ENCODE measurements at regions of chr5 and their contacts with region 1.

Region 1: DNA sequence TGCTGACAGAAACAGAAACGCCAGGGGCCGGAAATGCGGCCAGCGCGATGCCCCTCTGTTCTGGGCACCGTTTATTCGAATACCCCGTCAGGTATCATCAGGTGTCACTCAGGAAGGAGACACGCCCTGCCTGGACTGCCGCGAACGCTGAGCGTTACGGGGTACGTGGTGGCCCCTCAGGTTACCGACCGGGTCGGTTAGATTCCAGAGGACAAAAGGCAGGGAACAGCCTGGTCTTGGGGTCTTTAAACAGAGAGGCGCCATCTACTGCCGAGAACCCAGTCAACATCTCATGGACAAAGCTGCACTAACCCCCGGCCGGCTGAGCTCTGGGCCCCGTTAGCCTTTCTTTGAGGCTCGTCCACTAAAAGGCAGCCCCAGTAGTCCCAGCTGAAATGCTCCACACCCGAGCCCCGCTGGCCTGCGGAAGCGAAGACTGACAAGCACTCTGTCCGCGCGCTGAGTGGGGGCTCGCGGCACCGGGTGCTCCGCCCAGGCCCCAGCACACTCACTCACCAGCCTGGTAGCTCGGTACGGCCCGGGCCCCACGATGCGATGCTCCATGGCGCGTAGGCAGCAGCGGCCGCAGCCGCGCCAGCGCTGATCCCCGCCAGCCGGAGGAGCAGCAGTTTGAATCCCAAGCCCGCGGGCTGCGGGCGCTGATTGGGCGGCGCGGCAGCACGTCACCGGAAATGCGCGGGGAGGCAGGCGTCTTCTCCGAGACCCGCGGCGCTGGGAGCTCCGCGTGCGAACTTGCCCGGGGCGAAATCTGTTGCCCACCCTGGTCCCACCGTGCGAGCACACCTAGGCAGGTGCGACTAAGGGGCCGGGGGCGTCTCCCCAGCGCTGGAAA is at the start of gene DEPDC1B:
- DNase-seq: peak; percentile 91
- H3K4me3 ChIP-seq: peak within 1 kb of the TSS; percentile 83
- H3K27ac ChIP-seq: peak within 1 kb of the TSS; percentile 86
- H3K4me1 ChIP-seq: no peaks in the 10 kb centered on the region
- H3K27me3 ChIP-seq: no peaks in the 10 kb centered on the region
- CTCF ChIP-seq: no peak
- total RNA-seq, gene DEPDC1B: 8.4 to 25.1 TPM

Region 2: GRCh38 chr5:60522292-60522905 is 177.4 kb before region 1 on chr5:
- intact Hi-C with region 1: no loop called
- DNase-seq: no peak
- H3K4me3 ChIP-seq: no peak overlapping the region
- H3K27ac ChIP-seq: no peak overlapping the region
- H3K4me1 ChIP-seq: no peaks in the 10 kb centered on the region
- H3K27me3 ChIP-seq: no peaks in the 10 kb centered on the region
- CTCF ChIP-seq: no peak

Region 3: DNA sequence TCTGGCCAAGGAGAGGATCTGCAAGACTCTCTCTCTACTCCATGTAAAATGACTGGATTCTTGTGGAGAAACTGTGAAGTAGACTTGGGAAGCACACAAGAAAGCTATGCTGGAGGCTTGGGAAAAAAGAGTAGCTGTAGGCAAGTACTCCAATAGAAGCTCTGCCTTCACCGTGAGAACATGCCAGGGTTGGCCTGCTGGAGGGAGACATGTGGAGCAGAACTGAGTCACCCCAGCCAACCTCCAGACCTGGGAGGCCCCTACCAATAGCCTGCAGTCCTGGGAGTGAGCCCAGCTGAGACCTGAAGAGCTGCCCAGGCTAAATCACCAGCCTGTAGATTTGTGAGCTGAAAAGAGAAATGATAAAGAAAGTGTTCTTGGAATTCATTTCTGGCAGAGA is 66.4 kb before region 1 on chr5:
- intact Hi-C with region 1: no loop called
- DNase-seq: no peak
- H3K4me3 ChIP-seq: no peak overlapping the region
- H3K27ac ChIP-seq: no peak overlapping the region
- H3K4me1 ChIP-seq: no peaks in the 10 kb centered on the region
- H3K27me3 ChIP-seq: no peaks in the 10 kb centered on the region
- CTCF ChIP-seq: no peak

Region 4: DNA sequence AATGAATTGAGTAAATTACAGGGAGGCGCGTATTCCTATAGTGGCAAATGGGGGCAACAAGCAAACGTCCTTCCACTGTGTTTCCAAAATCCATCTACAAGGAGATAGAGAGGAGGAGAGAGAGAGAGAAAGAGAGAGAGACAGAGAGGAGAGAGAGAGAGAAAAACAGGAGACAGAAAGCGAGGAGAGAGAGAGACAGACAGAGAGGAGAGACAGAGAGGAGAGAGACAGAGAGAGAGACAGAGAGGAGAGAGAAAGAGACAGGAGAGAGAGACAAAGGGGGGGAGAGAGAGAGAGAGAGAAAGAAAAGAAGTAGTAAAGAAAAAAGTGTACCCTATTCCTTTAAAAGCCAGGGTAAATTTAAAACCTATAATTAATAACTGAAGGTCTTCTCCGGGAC is 39.7 kb before region 1 on chr5:
- intact Hi-C with region 1: no loop called
- DNase-seq: no peak
- H3K4me3 ChIP-seq: no peak overlapping the region
- H3K27ac ChIP-seq: no peak overlapping the region
- H3K4me1 ChIP-seq: no peaks in the 10 kb centered on the region
- H3K27me3 ChIP-seq: no peaks in the 10 kb centered on the region
- CTCF ChIP-seq: no peak

Region 5: DNA sequence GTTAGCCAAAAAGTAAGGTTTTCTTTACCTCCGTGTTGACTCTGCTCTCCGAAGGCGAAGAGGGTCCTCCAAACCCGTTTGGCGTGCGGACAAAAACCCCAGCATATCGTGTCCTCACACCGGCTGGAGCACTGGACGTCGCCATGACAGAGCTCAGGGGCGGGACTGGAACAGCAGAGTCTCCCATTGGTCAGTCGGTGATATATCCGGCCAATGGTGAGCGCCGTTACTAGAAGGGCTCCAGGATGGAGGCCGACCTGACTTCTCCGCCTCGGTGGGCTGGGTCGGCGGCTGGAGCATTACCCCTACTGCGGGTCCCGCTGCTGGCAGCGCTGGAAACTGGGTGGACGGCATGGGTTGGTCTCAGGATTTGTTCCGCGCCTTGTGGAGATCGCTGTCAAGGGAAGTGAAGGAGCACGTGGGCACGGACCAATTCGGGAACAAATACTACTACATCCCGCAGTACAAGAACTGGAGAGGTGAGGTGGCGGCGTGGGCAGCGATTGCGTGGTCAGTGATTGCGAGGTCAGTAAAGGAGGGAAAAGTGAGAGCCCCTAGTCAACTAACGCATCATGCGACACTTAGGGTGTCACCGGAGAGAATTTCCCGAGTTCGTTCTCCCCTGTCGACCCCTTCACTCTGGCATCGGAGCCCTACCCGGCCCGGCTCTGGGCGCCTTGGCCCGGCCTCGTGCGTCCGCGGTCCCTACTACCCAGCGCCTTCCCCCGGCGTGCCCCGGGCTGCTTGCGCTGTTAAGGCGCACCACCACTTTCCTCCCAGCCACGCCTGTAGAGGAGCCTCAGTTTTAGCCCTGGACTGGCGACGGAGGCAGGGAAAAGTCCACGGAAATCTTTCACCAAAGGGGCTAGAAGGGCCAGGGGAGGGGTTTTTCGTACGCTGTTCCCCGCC is 245.4 kb after region 1 on chr5 and contains the starts of genes ERCC8 and NDUFAF2:
- intact Hi-C with region 1: loop called (anchors 10 kb)
- DNase-seq: peak; percentile 94
- H3K4me3 ChIP-seq: peak within 1 kb of the TSS; percentile 74
- H3K27ac ChIP-seq: peak within 1 kb of the TSS; percentile 63
- H3K4me1 ChIP-seq: no peaks in the 10 kb centered on the region
- H3K27me3 ChIP-seq: no peaks in the 10 kb centered on the region
- CTCF ChIP-seq: no peak
- total RNA-seq, gene ERCC8: 9.0 to 9.8 TPM
- total RNA-seq, gene NDUFAF2: 20.9 to 36.0 TPM